Activated CD8-positive, alpha-beta memory T cell treated with anti-CD3 and anti-CD28 coated beads, Interleukin-2, amount 10 ng/mL, durations not matched to agents 7 days and 5 days (primary cell): ENCODE measurements at regions of chr7 and their contacts with region 1.

Region 1: DNA sequence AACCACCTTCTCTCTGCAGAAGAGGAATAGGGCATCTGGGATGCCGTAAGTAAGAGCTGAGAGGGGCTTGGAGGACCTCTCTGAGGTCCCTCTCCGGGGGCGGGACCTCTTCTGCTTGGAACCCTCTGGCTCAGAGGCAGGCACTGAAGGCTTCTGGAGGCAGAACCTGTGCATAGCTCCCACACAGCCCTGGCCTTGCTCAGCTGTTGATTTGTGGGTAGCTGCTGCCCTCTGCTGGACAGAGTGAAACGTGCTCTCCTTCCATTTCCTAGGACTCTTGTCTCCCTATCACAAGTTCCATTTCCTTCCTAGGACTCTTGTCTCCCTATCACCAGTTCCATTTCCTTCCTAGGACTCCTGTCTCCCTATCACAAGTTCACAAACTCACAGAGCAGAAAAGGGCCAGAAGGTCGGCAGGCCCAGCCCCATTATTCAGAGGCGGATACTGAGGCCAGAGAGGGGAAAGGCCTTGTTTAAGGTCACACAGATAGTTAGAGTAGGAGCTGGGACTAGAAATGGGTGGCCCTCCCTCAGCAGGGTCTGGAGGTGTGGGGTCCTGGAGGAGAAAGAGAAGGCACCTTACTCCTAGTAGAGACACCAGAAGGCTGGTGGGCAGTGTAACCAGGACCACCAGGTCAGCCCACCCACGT is 30.3 kb upstream of the GARS1 start:
- DNase-seq: peak; percentile 81
- ATAC-seq: peak; percentile 96
- H3K4me3 Mint-ChIP-seq: no peak overlapping the region
- H3K27ac Mint-ChIP-seq: no peak overlapping the region
- H3K4me1 Mint-ChIP-seq: peaks cover 3% of the 10 kb centered on the region
- H3K27me3 Mint-ChIP-seq: no peaks in the 10 kb centered on the region

Region 2: GRCh38 chr7:30164567-30164966 is 399.8 kb before region 1 on chr7:
- CTCF ChIA-PET with region 1: interaction called, 13 read pairs
- DNase-seq: no peak
- ATAC-seq: no peak
- H3K4me3 Mint-ChIP-seq: no peak overlapping the region
- H3K27ac Mint-ChIP-seq: no peak overlapping the region
- H3K4me1 Mint-ChIP-seq: peaks cover 45% of the 10 kb centered on the region
- H3K27me3 Mint-ChIP-seq: peaks cover 4% of the 10 kb centered on the region

Region 3: GRCh38 chr7:30276203-30276900 is 288.0 kb before region 1 on chr7:
- CTCF ChIA-PET with region 1: interaction called, 48 read pairs
- DNase-seq: peak; percentile 73
- ATAC-seq: peak; percentile 82
- H3K4me3 Mint-ChIP-seq: no peak overlapping the region
- H3K27ac Mint-ChIP-seq: no peak overlapping the region
- H3K4me1 Mint-ChIP-seq: peaks cover 12% of the 10 kb centered on the region
- H3K27me3 Mint-ChIP-seq: no peaks in the 10 kb centered on the region

Region 4: GRCh38 chr7:30510124-30511075 is 54.0 kb before region 1 on chr7:
- CTCF ChIA-PET with region 1: interaction called, 42 read pairs
- DNase-seq: peak; percentile 54
- ATAC-seq: peak; percentile 68
- H3K4me3 Mint-ChIP-seq: no peak overlapping the region
- H3K27ac Mint-ChIP-seq: no peak overlapping the region
- H3K4me1 Mint-ChIP-seq: peaks cover 21% of the 10 kb centered on the region
- H3K27me3 Mint-ChIP-seq: no peaks in the 10 kb centered on the region

Region 5: DNA sequence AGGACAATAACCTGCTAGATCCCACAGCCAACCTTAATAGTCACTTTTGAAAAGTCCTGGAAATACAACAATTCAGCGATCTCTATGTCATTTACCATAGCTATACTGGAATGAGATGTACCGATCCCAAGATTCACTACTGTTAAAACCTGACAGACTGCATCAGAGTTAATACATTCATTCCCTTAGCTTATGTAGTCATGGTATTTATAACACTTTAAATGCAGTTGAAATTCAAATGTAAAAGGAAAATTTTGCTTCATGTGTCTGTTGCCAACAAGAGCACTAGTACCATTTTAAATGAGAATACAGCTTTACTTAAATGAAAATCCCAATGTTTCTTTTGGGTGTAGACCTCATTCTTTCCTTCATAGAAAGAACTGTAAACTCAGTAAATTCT is 48.6 kb before region 1 on chr7:
- CTCF ChIA-PET with region 1: interaction called, 42 read pairs
- DNase-seq: no peak
- ATAC-seq: no peak
- H3K4me3 Mint-ChIP-seq: no peak overlapping the region
- H3K27ac Mint-ChIP-seq: no peak overlapping the region
- H3K4me1 Mint-ChIP-seq: peaks cover 9% of the 10 kb centered on the region
- H3K27me3 Mint-ChIP-seq: no peaks in the 10 kb centered on the region

Region 6: GRCh38 chr7:30548762-30549344 is 15.5 kb before region 1 on chr7:
- CTCF ChIA-PET with region 1: interaction called, 37 read pairs
- DNase-seq: peak; percentile 55
- ATAC-seq: no peak
- H3K4me3 Mint-ChIP-seq: no peak overlapping the region
- H3K27ac Mint-ChIP-seq: no peak overlapping the region
- H3K4me1 Mint-ChIP-seq: peaks cover 4% of the 10 kb centered on the region
- H3K27me3 Mint-ChIP-seq: no peaks in the 10 kb centered on the region

Region 7: DNA sequence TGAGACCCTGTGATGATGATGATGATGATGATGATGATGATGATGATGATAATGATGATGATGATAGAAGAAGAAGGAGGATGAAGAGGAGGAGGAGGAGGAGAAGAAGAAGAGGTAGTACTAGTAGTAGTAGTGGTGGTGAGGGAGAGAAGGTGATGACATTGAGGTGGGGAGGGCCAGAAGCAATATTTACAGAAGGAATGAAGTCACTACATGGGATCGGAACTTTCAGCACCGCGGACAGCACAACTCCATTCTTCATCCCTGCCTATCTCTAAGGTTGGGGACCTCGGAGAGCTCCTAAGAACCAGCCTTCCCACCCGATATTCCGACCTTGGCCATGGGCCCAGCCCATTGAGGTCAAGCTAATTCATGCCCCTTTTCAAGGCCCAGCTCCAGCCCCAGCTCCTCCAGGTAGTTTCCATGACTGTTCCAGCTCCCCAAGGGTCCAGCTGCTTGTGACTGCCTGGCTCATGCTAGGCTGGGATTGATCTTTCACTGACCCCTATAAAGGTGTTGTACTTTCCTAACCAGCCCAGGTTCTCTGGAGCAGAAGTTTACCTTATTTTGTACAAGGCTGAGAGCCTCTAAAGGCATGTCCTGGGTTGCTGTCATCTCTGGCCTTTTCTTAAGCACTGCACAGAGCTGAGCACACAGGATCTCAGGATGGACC is 107.6 kb after region 1 on chr7:
- CTCF ChIA-PET with region 1: no interaction called
- DNase-seq: peak; percentile 50
- ATAC-seq: peak; percentile 45
- H3K4me3 Mint-ChIP-seq: no peak overlapping the region
- H3K27ac Mint-ChIP-seq: no peak overlapping the region
- H3K4me1 Mint-ChIP-seq: no peaks in the 10 kb centered on the region
- H3K27me3 Mint-ChIP-seq: peaks cover under 1% of the 10 kb centered on the region

Region 8: GRCh38 chr7:30740424-30741181 is 176.2 kb after region 1 on chr7:
- CTCF ChIA-PET with region 1: interaction called, 21 read pairs
- DNase-seq: peak; percentile 81
- ATAC-seq: peak; percentile 59
- H3K4me3 Mint-ChIP-seq: no peak overlapping the region
- H3K27ac Mint-ChIP-seq: no peak overlapping the region
- H3K4me1 Mint-ChIP-seq: peaks cover 35% of the 10 kb centered on the region
- H3K27me3 Mint-ChIP-seq: no peaks in the 10 kb centered on the region